ENCODE measurements at regions of chr21 and their contacts with region 1.

Region 1: GRCh38 chr21:26489781-26490180 is 83.3 kb downstream of the CYYR1 start:
- DNase-seq: no peak
- ATAC-seq: no peak

Region 2: DNA sequence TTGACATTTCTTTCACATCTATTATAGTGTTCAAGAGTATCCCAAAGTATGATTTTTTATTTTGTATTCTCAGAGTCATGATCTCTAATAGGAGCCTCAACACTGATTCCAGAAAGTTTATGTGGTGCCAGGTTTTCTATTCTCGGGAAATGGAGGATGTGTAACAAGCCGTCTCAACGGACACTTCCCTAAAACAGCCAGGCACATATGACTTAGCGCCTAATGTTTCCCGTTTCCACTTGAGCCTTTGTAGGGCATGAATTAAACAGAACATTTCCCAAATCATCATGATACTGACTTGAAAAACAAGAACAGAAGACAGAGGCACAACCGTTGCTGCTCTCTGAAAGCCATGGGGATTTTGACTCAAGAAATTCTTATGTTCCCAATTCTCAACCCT is 75.3 kb after region 1 on chr21:
- intact Hi-C with region 1: loop called (anchors 10 kb)
- DNase-seq: no peak
- ATAC-seq: no peak

Region 3: GRCh38 chr21:26637201-26637745 is 147.5 kb after region 1 on chr21:
- intact Hi-C with region 1: no loop called
- DNase-seq: no peak
- ATAC-seq: no peak

Measured in Right ventricle myocardium inferior (tissue), 1 donor.